ENCODE measurements at regions of chr2 and their contacts with region 1.

Region 1: GRCh38 chr2:199940373-199940772 is 14.9 kb downstream of the TYW5 start:
- DNase-seq: peak; percentile 38
- ATAC-seq: peak; percentile 62
- H3K4me3 ChIP-seq: no peak overlapping the region
- H3K27ac ChIP-seq: no peak overlapping the region
- H3K4me1 ChIP-seq: no peaks in the 10 kb centered on the region; the same call in 1 of the 2 replicates
- H3K27me3 ChIP-seq: no peaks in the 10 kb centered on the region
- CTCF ChIP-seq: peak; percentile 41
- POLR2A ChIP-seq: no peak
- RAD21 ChIP-seq: peak; percentile 36

Region 2: DNA sequence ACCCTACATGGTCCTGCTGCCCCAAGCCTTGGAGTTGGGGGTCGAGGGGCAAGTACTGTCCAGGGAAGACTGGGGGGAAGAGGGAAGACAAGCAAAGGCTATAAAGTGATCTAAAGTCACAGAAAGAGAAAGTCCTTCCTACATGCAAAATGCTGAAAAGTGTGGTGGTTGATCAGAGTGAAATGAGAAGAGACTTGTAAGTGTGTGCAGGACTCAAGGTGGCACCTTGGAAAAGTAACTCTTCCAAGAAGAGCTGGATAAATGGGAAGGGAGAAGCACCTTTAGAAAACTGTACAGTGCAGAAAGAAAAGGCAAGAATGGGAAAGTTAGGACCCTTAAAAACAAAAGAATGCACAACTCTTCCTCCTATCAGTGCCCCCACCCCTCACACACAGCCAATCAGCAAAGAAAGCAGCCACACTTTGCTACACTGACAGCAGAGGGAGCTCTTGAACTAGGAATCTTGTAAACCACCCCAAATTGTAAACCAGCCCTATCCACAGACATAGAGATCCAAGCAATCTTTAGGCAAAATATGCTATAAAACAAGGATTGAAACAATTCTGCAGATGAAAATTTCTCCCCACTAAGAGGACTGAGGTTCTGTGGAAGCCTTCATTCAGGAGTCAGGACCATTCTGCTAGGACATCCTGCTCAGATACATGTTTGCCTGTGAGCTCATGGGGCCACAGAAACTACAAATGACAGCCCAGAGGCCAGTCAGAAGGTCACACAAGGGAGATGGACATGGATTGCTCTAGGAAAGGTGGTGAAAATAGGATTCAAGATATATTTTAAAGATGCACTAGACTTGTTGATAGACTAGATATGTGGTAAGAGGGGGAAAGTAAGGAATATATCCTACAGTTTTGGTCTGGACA is 235.8 kb before region 1 on chr2:
- CTCF ChIA-PET with region 1: interaction called, 5 read pairs
- POLR2A ChIA-PET with region 1: no interaction called
- dilution Hi-C with region 1: no loop called
- in situ Hi-C with region 1: no loop called
- intact Hi-C with region 1: loop called (anchors 1 kb)
- DNase-seq: peak; percentile 24
- ATAC-seq: peak; percentile 98
- H3K4me3 ChIP-seq: no peak overlapping the region
- H3K27ac ChIP-seq: no peak overlapping the region
- H3K4me1 ChIP-seq: no peaks in the 10 kb centered on the region
- H3K27me3 ChIP-seq: no peaks in the 10 kb centered on the region
- CTCF ChIP-seq: peak; percentile 53
- POLR2A ChIP-seq: no peak
- RAD21 ChIP-seq: peak; percentile 56

Region 3: GRCh38 chr2:200110381-200110780 is 170.0 kb after region 1 on chr2:
- CTCF ChIA-PET with region 1: no interaction called
- POLR2A ChIA-PET with region 1: no interaction called
- dilution Hi-C with region 1: no loop called
- in situ Hi-C with region 1: no loop called
- intact Hi-C with region 1: no loop called
- DNase-seq: no peak
- ATAC-seq: no peak
- H3K4me3 ChIP-seq: no peak overlapping the region
- H3K27ac ChIP-seq: no peak overlapping the region
- H3K4me1 ChIP-seq: no peaks in the 10 kb centered on the region
- H3K27me3 ChIP-seq: no peaks in the 10 kb centered on the region
- CTCF ChIP-seq: no peak
- POLR2A ChIP-seq: no peak
- RAD21 ChIP-seq: no peak

Measured in IMR-90 (cell line).